ENCODE measurements at regions of chr14 and their contacts with region 1.

Region 1: GRCh38 chr14:34722717-34723545 is 8.5 kb upstream of the CFL2 start:
- DNase-seq: peak in 1 of 2 experiments; percentile 39
- H3K4me3 ChIP-seq: no peak overlapping the region
- H3K27ac ChIP-seq: no peak overlapping the region
- H3K4me1 ChIP-seq: no peaks in the 10 kb centered on the region
- H3K27me3 ChIP-seq: no peaks in the 10 kb centered on the region
- CTCF ChIP-seq: peak; percentile 80

Region 2: GRCh38 chr14:34671716-34672115 is 51.2 kb before region 1 on chr14:
- CTCF ChIA-PET with region 1: interaction called, 4 read pairs
- POLR2A ChIA-PET with region 1: no interaction called
- intact Hi-C with region 1: loop called (anchors 2 kb)
- DNase-seq: no peak
- H3K4me3 ChIP-seq: no peak overlapping the region
- H3K27ac ChIP-seq: no peak overlapping the region
- H3K4me1 ChIP-seq: peaks cover 3% of the 10 kb centered on the region
- H3K27me3 ChIP-seq: no peaks in the 10 kb centered on the region
- CTCF ChIP-seq: no peak

Region 3: GRCh38 chr14:34699873-34700621 is 22.9 kb before region 1 on chr14:
- CTCF ChIA-PET with region 1: no interaction called
- POLR2A ChIA-PET with region 1: no interaction called
- intact Hi-C with region 1: no loop called
- DNase-seq: peak; percentile 29 to 88
- H3K4me3 ChIP-seq: peak overlapping the region; percentile 34; the same call in 1 of the 2 replicates
- H3K27ac ChIP-seq: peak overlapping the region; percentile 76
- H3K4me1 ChIP-seq: peaks cover 36% of the 10 kb centered on the region
- H3K27me3 ChIP-seq: no peaks in the 10 kb centered on the region
- CTCF ChIP-seq: no peak